ENCODE measurements at regions of chr12 and their contacts with region 1.

Region 1: DNA sequence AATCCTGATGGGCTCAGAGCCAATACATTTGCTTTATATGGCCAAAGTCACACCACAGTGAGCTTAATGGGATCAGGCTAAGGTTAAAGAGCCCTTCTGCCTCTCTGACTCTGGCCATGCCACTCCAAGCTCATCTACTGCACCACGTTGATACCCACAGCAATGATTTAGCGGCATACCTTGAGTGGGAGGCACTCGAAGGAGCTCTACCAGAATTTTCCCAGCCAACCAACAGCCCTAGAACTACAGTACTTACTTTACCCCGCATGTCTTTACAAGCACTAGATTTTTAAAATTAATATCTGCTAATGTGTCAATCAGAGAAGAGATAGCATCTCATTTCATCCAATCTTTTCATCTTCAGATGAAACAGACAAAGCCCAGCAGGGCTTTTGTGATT is 300.5 kb downstream of the GRIN2B start:
- DNase-seq: no peak
- H3K4me3 ChIP-seq: no peak overlapping the region
- H3K27ac ChIP-seq: no peak overlapping the region
- H3K4me1 ChIP-seq: no peaks in the 10 kb centered on the region
- H3K27me3 ChIP-seq: no peaks in the 10 kb centered on the region
- CTCF ChIP-seq: no peak
- EP300 ChIP-seq: no peak
- POLR2A ChIP-seq: no peak

Region 2: GRCh38 chr12:13390381-13390861 is 290.5 kb before region 1 on chr12:
- in situ Hi-C with region 1: no loop called
- intact Hi-C with region 1: no loop called
- DNase-seq: peak; percentile 95
- H3K4me3 ChIP-seq: no peak overlapping the region
- H3K27ac ChIP-seq: peak overlapping the region; percentile 77 to 84 (median 83)
- H3K4me1 ChIP-seq: peaks cover 10 to 45% (median 30%) of the 10 kb centered on the region in 4 donors
- H3K27me3 ChIP-seq: no peaks in the 10 kb centered on the region
- CTCF ChIP-seq: no peak
- EP300 ChIP-seq: no peak
- POLR2A ChIP-seq: no peak

Region 3: GRCh38 chr12:14537088-14537487 is 856.2 kb after region 1 on chr12:
- in situ Hi-C with region 1: no loop called
- intact Hi-C with region 1: loop called (anchors 10 kb)
- DNase-seq: no peak
- H3K4me3 ChIP-seq: no peak overlapping the region
- H3K27ac ChIP-seq: peak overlapping the region; percentile 35 to 55 (median 42)
- H3K4me1 ChIP-seq: peaks cover 0 to 17% (median 4%) of the 10 kb centered on the region in 4 donors
- H3K27me3 ChIP-seq: no peaks in the 10 kb centered on the region
- CTCF ChIP-seq: no peak
- EP300 ChIP-seq: no peak
- POLR2A ChIP-seq: no peak

Measured in transverse colon (tissue), 4 donors.